ENCODE measurements at regions of chr11 and their contacts with region 1.

Region 1: DNA sequence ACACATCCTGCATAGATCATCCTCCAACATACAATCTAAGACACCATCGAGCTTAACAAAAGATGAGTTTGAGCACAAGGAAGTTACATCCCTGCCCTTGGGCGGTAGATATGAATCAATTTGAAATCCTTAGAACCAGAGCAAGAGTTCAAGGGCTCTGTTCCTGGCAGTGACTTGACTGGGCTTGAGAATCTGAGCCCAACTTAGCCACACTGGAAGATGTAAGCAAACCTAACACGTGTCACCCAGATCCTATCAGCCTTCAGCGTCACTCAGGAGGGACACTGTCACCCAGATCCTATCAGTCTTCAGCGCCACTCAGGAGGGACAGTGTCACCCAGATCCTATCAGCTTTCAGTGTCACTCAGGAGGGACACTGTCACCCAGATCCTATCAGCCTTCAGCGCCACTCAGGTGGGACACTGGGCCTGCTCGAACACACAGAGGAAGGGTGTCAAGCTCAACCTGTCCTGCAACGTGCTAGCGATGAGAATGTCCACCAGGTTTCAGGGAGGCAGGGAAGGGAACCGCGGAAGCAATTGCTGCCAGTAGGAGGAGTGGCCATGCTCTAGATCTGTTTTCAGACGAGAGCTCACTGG is 32.8 kb upstream of the CTSD start:
- DNase-seq: no peak
- H3K4me3 ChIP-seq: no peak overlapping the region
- H3K4me3 Mint-ChIP-seq: peak overlapping the region in 1 of 2 donors; percentile 40
- H3K27ac ChIP-seq: no peak overlapping the region
- H3K27ac Mint-ChIP-seq: no peak overlapping the region
- H3K4me1 ChIP-seq: peaks cover 4 to 14% of the 10 kb centered on the region in 2 donors
- H3K4me1 Mint-ChIP-seq: peaks cover 11% of the 10 kb centered on the region
- H3K27me3 ChIP-seq: peaks cover 3 to 14% of the 10 kb centered on the region in 2 donors
- H3K27me3 Mint-ChIP-seq: peaks cover 26 to 66% (median 47%) of the 10 kb centered on the region in 3 donors
- CTCF ChIP-seq: no peak

Region 2: GRCh38 chr11:1757861-1758610 is 38.5 kb before region 1 on chr11:
- intact Hi-C with region 1: loop called (anchors 5 kb)
- DNase-seq: peak in 2 of 3 donors; percentile 27 to 32
- H3K4me3 ChIP-seq: peak overlapping the region in 2 of 3 experiments; percentile 10 to 98
- H3K4me3 Mint-ChIP-seq: peak overlapping the region; percentile 80 to 92
- H3K27ac ChIP-seq: no peak overlapping the region
- H3K27ac Mint-ChIP-seq: peak overlapping the region in 6 of 7 donors; percentile 5 to 79 (median 58)
- H3K4me1 ChIP-seq: peaks cover 84 to 94% of the 10 kb centered on the region in 2 donors
- H3K4me1 Mint-ChIP-seq: peaks cover 82% of the 10 kb centered on the region
- H3K27me3 ChIP-seq: no peaks in the 10 kb centered on the region
- H3K27me3 Mint-ChIP-seq: peaks cover 0 to 7% (median 3%) of the 10 kb centered on the region in 3 donors
- CTCF ChIP-seq: no peak

Region 3: GRCh38 chr11:1782831-1783724 is 13.4 kb before region 1 on chr11:
- intact Hi-C with region 1: no loop called
- DNase-seq: peak; percentile 95 to 97 (median 95)
- H3K4me3 ChIP-seq: peak overlapping the region in 1 of 3 experiments; percentile 46
- H3K4me3 Mint-ChIP-seq: peak overlapping the region; percentile 64 to 83
- H3K27ac ChIP-seq: peak overlapping the region; percentile 96 to 99
- H3K27ac Mint-ChIP-seq: peak overlapping the region; percentile 98 to 100 (median 98)
- H3K4me1 ChIP-seq: peaks cover 81 to 89% of the 10 kb centered on the region in 2 donors
- H3K4me1 Mint-ChIP-seq: peaks cover 92% of the 10 kb centered on the region
- H3K27me3 ChIP-seq: no peaks in the 10 kb centered on the region
- H3K27me3 Mint-ChIP-seq: peaks cover 2 to 12% (median 4%) of the 10 kb centered on the region in 3 donors
- CTCF ChIP-seq: no peak

Region 4: GRCh38 chr11:1807264-1807995 is 10.9 kb after region 1 on chr11:
- intact Hi-C with region 1: no loop called
- DNase-seq: no peak
- H3K4me3 ChIP-seq: no peak overlapping the region
- H3K4me3 Mint-ChIP-seq: peak overlapping the region in 1 of 2 donors; percentile 81
- H3K27ac ChIP-seq: no peak overlapping the region
- H3K27ac Mint-ChIP-seq: no peak overlapping the region
- H3K4me1 ChIP-seq: peaks cover 14 to 15% of the 10 kb centered on the region in 2 donors
- H3K4me1 Mint-ChIP-seq: peaks cover 16% of the 10 kb centered on the region
- H3K27me3 ChIP-seq: peaks cover 44 to 85% of the 10 kb centered on the region in 2 donors
- H3K27me3 Mint-ChIP-seq: peaks cover 80 to 87% (median 86%) of the 10 kb centered on the region in 3 donors
- CTCF ChIP-seq: no peak

Region 5: GRCh38 chr11:1827095-1827813 is 30.7 kb after region 1 on chr11:
- intact Hi-C with region 1: loop called in 1 of 2 experiments (anchors 5 kb)
- DNase-seq: peak in 1 of 3 donors; percentile 3
- H3K4me3 ChIP-seq: no peak overlapping the region
- H3K4me3 Mint-ChIP-seq: peak overlapping the region in 1 of 2 donors; percentile 39
- H3K27ac ChIP-seq: no peak overlapping the region
- H3K27ac Mint-ChIP-seq: peak overlapping the region in 1 of 7 donors; percentile 64
- H3K4me1 ChIP-seq: peaks cover 3 to 4% of the 10 kb centered on the region in 2 donors
- H3K4me1 Mint-ChIP-seq: peaks cover 2% of the 10 kb centered on the region
- H3K27me3 ChIP-seq: peaks cover 0 to 50% of the 10 kb centered on the region in 2 donors
- H3K27me3 Mint-ChIP-seq: peaks cover 48 to 77% (median 50%) of the 10 kb centered on the region in 3 donors
- CTCF ChIP-seq: no peak